Dendritic cell treated with granulocyte-macrophage colony-stimulating factor and Interleukin-4, amounts not matched to agents 40 ng/mL and 50 ng/mL, for 4 days (primary cell): ENCODE measurements at regions of chr12 and their contacts with region 1.

Region 1: DNA sequence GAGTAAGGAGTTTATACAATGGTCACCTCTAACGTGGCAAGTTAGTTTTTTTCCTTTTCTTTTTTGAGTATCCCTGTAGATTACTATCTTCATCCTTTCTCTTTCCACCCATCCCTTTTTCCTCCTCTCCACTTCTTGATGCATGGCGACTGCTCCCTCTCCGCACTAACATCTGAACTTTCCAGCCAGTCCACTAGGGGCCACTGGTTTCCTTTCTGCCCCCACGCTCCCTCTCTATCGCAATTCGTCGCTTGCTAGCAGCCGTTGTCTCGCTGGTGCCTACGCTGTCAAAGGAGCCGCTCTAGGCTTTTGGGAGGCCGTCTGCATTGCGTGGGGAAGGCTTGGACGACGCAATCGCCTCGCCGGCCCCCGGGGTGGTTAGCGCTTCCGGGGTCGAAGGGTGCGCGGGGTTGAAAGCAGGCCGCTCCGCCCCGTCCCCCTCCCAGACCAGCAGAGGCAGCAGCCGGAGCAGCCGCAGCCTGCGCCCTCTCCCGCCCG is at the start of gene PCBP2:
- H3K4me3 Mint-ChIP-seq: peak within 1 kb of the TSS; percentile 92
- H3K27ac Mint-ChIP-seq: peak within 1 kb of the TSS; percentile 96
- H3K4me1 Mint-ChIP-seq: peaks cover 31% of the 10 kb centered on the region
- H3K27me3 Mint-ChIP-seq: no peaks in the 10 kb centered on the region

Region 2: GRCh38 chr12:53441040-53441833 is 10.5 kb before region 1 on chr12 and contains the start of gene PRR13:
- intact Hi-C with region 1: loop called (anchors 1 kb)
- H3K4me3 Mint-ChIP-seq: peak within 1 kb of the TSS; percentile 93
- H3K27ac Mint-ChIP-seq: peak within 1 kb of the TSS; percentile 97
- H3K4me1 Mint-ChIP-seq: peaks cover 38% of the 10 kb centered on the region
- H3K27me3 Mint-ChIP-seq: no peaks in the 10 kb centered on the region

Region 3: DNA sequence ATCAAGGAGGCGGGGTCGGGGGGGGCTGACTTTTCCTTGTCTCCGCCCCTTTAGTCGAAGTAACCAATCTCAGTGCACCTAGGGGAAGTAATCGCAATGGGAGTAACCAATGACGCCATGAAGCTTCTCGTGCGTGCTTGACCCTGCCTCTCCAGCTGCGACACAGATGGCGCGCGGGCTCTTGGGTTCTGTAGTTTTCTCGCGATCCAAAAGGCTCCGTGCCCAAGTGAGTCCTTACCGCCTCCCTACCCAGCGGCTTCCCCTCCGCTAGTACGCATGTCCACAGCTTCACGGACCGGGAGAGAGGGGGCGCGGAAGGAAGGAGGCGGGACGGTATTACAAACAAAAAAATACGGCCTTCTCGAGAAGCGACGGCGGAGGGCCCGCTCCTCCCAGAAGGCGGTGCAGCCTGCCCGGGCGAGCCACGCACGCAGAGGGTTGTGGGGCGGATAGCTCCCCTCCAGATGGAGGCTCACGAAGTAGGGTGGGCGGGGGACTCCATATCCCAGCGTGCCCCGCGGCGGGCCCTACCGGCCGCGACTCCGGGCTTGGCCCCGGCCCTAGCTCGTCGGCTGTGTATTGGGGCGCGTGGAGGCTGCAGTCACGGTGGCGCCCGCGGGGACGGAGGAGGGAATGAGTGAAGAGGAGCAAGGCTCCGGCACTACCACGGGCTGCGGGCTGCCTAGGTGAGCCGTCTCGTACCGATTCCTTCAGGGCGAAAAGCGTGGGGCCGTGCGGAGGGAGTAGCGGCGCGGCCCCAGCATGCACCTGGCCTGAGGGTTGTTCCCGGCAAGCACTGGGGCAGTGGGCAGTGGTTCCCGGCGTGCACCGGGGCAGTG is 49.3 kb after region 1 on chr12 and contains the start of gene TARBP2:
- intact Hi-C with region 1: loop called (anchors 2 kb)
- H3K4me3 Mint-ChIP-seq: peak within 1 kb of the TSS; percentile 88
- H3K27ac Mint-ChIP-seq: peak within 1 kb of the TSS; percentile 94
- H3K4me1 Mint-ChIP-seq: peaks cover 80% of the 10 kb centered on the region
- H3K27me3 Mint-ChIP-seq: no peaks in the 10 kb centered on the region

Region 4: DNA sequence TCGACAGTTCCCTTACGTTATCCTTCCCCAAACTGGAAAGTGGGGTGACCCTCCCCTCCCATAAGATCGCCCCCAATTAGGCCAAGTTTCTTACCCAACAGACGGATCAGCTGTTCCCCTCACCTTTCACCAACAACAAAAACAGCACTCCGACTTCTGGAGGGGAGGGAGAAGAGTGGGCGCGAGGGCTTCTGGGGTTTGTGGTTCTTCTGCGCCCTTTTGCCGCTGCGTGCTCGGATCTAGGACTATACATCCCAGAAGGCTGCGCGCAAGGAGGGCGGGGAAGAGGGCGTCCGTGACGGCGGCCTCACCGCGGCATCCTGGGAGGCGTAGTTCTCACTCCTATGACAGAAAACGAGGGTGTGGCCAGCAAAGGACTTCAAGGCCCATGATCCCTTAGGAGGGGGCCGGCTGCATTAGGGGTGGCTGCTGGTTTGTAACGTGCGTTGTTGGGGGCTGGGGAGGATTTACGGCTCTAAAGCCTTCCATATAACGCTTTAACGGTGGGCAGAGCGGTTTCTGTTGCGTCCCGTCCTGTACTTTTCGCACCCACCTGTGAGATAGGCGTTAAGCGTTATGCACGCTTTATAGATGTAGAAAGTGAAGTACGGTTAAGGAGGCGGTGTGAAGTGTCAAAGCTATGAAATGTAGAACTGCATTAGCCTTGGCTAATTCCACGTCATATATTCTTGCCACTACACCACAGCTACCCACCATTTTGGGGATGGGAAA is 275.8 kb after region 1 on chr12 and contains the start of gene CALCOCO1:
- intact Hi-C with region 1: loop called (anchors 5 kb)
- H3K4me3 Mint-ChIP-seq: peak within 1 kb of the TSS; percentile 98
- H3K27ac Mint-ChIP-seq: peak within 1 kb of the TSS; percentile 87
- H3K4me1 Mint-ChIP-seq: peaks cover 23% of the 10 kb centered on the region
- H3K27me3 Mint-ChIP-seq: peaks cover 6% of the 10 kb centered on the region